Endothelial cell of umbilical vein (primary cell): ENCODE measurements at regions of chr10 and their contacts with region 1.

Region 1: GRCh38 chr10:17768957-17769356 is 17.0 kb downstream of the TMEM236 start:
- DNase-seq: peak; percentile 93
- H3K4me3 ChIP-seq: no peak overlapping the region
- H3K27ac ChIP-seq: peak overlapping the region; percentile 24
- H3K4me1 ChIP-seq: peaks cover 16% of the 10 kb centered on the region
- H3K27me3 ChIP-seq: no peaks in the 10 kb centered on the region
- CTCF ChIP-seq: no peak
- POLR2A ChIP-seq: no peak

Region 2: DNA sequence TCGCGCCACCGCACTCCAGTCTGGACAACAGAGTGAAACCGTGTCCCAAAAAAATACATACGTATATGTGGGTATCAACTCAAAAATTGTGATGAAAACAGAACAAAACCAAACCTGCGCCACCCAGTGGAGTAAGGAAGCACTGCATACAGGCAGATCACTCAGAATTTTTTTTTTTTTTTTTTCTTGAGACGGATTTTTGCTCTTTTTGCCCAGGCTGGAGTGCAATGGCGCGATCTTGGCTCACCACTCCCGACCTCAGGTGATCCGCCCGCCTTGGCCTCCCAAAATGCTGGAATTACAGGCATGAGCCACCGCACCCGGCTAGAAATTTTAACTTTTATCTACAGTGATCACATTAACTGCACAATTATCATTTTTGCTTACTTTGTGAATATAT is 26.0 kb before region 1 on chr10:
- CTCF ChIA-PET with region 1: interaction called, 4 read pairs
- POLR2A ChIA-PET with region 1: no interaction called
- dilution Hi-C with region 1: no loop called
- intact Hi-C with region 1: loop called (anchors 1 kb)
- DNase-seq: peak; percentile 66
- H3K4me3 ChIP-seq: no peak overlapping the region
- H3K27ac ChIP-seq: no peak overlapping the region
- H3K4me1 ChIP-seq: peaks cover 25% of the 10 kb centered on the region
- H3K27me3 ChIP-seq: no peaks in the 10 kb centered on the region
- CTCF ChIP-seq: peak; percentile 67 to 75
- POLR2A ChIP-seq: no peak

Region 3: GRCh38 chr10:17836942-17837341 is 68.0 kb after region 1 on chr10:
- CTCF ChIA-PET with region 1: no interaction called
- POLR2A ChIA-PET with region 1: no interaction called
- dilution Hi-C with region 1: no loop called
- intact Hi-C with region 1: loop called (anchors 2 kb)
- DNase-seq: peak; percentile 87
- H3K4me3 ChIP-seq: peak overlapping the region in 1 of 3 experiments; percentile 28
- H3K27ac ChIP-seq: peak overlapping the region; percentile 62
- H3K4me1 ChIP-seq: peaks cover 20% of the 10 kb centered on the region
- H3K27me3 ChIP-seq: no peaks in the 10 kb centered on the region
- CTCF ChIP-seq: no peak
- POLR2A ChIP-seq: no peak